CD8-positive, alpha-beta T cell (primary cell): ENCODE measurements at regions of chr1 and their contacts with region 1.

Region 1: GRCh38 chr1:65075123-65075976 is 72.7 kb upstream of the AK4 start:
- DNase-seq: peak; percentile 27 to 88 (median 70)
- ATAC-seq: peak; percentile 98
- H3K4me3 ChIP-seq: no peak overlapping the region
- H3K4me3 Mint-ChIP-seq: no peak overlapping the region
- H3K27ac ChIP-seq: no peak overlapping the region
- H3K27ac Mint-ChIP-seq: no peak overlapping the region
- H3K4me1 ChIP-seq: no peaks in the 10 kb centered on the region
- H3K4me1 Mint-ChIP-seq: peaks cover 19% of the 10 kb centered on the region
- H3K27me3 ChIP-seq: no peaks in the 10 kb centered on the region
- H3K27me3 Mint-ChIP-seq: peaks cover 2% of the 10 kb centered on the region
- CTCF ChIP-seq: peak; percentile 74

Region 2: GRCh38 chr1:64744492-64745180 is 330.7 kb before region 1 on chr1 and contains the start of gene RAVER2:
- CTCF ChIA-PET with region 1: interaction called, 7 read pairs
- POLR2A ChIA-PET with region 1: no interaction called
- intact Hi-C with region 1: loop called in 1 of 2 experiments (anchors 2 kb)
- DNase-seq: peak; percentile 16 to 79 (median 57)
- ATAC-seq: peak; percentile 81
- H3K4me3 ChIP-seq: peak within 1 kb of the TSS; percentile 52 to 64
- H3K4me3 Mint-ChIP-seq: peak within 1 kb of the TSS; percentile 90
- H3K27ac ChIP-seq: peak within 1 kb of the TSS in 1 of 2 experiments; percentile 53
- H3K27ac Mint-ChIP-seq: peak within 1 kb of the TSS; percentile 75
- H3K4me1 ChIP-seq: peaks cover 13% of the 10 kb centered on the region
- H3K4me1 Mint-ChIP-seq: peaks cover 22% of the 10 kb centered on the region
- H3K27me3 ChIP-seq: no peaks in the 10 kb centered on the region
- H3K27me3 Mint-ChIP-seq: peaks cover 4% of the 10 kb centered on the region
- CTCF ChIP-seq: peak; percentile 43
- total RNA-seq, gene RAVER2: 1.1 TPM

Region 3: DNA sequence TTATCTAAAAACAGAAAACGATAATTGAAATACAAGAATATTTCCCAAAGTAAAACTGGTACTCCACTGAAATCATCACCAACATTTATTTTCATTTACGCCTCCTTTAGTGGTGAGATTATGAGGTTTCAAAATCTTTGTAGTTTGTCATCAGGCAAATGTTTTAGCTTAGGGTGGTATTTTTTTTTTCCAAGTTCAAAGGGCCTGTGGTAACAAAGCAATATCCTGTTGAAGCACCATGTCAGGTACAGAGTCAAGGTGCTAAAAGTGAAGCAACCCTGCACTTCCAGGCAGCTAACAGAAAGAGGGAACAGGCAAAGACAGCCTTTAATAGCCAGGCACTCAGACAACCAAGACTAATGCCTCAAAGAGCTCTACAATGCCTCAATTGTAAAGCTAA is 198.2 kb before region 1 on chr1:
- CTCF ChIA-PET with region 1: interaction called, 20 read pairs
- POLR2A ChIA-PET with region 1: no interaction called
- intact Hi-C with region 1: no loop called
- DNase-seq: peak in 6 of 9 experiments; percentile 33 to 92 (median 54)
- ATAC-seq: peak; percentile 93
- H3K4me3 ChIP-seq: no peak overlapping the region
- H3K4me3 Mint-ChIP-seq: peak overlapping the region; percentile 69
- H3K27ac ChIP-seq: peak overlapping the region in 1 of 2 experiments; percentile 51
- H3K27ac Mint-ChIP-seq: peak overlapping the region; percentile 82
- H3K4me1 ChIP-seq: peaks cover 48% of the 10 kb centered on the region
- H3K4me1 Mint-ChIP-seq: peaks cover 79% of the 10 kb centered on the region
- H3K27me3 ChIP-seq: no peaks in the 10 kb centered on the region
- H3K27me3 Mint-ChIP-seq: no peaks in the 10 kb centered on the region
- CTCF ChIP-seq: no peak

Region 4: GRCh38 chr1:64980745-64981600 is 94.4 kb before region 1 on chr1:
- CTCF ChIA-PET with region 1: no interaction called
- POLR2A ChIA-PET with region 1: no interaction called
- intact Hi-C with region 1: no loop called
- DNase-seq: no peak
- ATAC-seq: no peak
- H3K4me3 ChIP-seq: no peak overlapping the region
- H3K4me3 Mint-ChIP-seq: no peak overlapping the region
- H3K27ac ChIP-seq: no peak overlapping the region
- H3K27ac Mint-ChIP-seq: no peak overlapping the region
- H3K4me1 ChIP-seq: no peaks in the 10 kb centered on the region
- H3K4me1 Mint-ChIP-seq: peaks cover 9% of the 10 kb centered on the region
- H3K27me3 ChIP-seq: no peaks in the 10 kb centered on the region
- H3K27me3 Mint-ChIP-seq: no peaks in the 10 kb centered on the region
- CTCF ChIP-seq: no peak

Region 5: DNA sequence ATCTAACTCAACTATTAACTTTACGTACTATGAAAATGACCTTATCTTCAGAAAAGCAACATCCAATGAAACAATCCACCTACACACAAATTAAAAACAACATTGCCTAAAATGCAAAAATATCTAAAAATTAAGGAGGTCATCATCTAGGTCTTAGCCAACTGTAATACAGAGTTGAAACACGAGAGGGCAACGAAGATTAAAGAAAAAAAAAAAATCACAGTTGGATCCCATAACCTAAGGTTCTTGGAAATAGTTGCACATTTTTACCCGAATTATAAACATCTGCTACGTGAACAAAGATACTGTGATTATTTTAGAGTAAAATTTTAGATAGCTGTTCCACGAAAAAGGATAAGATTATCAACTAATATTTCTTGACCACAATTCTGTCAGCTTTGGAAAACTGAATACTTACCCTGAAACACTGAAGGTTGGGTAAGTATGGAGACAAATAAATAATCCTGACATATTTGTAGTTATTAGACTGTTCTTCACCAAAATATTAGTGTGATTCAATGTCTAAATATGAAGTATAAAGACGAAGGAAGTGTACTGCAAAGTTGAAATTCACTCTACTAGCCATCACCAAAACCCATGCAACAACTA is 15.3 kb before region 1 on chr1:
- CTCF ChIA-PET with region 1: interaction called, 118 read pairs
- POLR2A ChIA-PET with region 1: interaction called, 22 read pairs
- intact Hi-C with region 1: loop called (anchors 1 kb)
- DNase-seq: peak in 2 of 9 experiments; percentile 47 to 60
- ATAC-seq: peak; percentile 46
- H3K4me3 ChIP-seq: no peak overlapping the region
- H3K4me3 Mint-ChIP-seq: no peak overlapping the region
- H3K27ac ChIP-seq: no peak overlapping the region
- H3K27ac Mint-ChIP-seq: no peak overlapping the region
- H3K4me1 ChIP-seq: peaks cover 29% of the 10 kb centered on the region
- H3K4me1 Mint-ChIP-seq: peaks cover 60% of the 10 kb centered on the region
- H3K27me3 ChIP-seq: no peaks in the 10 kb centered on the region
- H3K27me3 Mint-ChIP-seq: no peaks in the 10 kb centered on the region
- CTCF ChIP-seq: peak; percentile 64

Region 6: DNA sequence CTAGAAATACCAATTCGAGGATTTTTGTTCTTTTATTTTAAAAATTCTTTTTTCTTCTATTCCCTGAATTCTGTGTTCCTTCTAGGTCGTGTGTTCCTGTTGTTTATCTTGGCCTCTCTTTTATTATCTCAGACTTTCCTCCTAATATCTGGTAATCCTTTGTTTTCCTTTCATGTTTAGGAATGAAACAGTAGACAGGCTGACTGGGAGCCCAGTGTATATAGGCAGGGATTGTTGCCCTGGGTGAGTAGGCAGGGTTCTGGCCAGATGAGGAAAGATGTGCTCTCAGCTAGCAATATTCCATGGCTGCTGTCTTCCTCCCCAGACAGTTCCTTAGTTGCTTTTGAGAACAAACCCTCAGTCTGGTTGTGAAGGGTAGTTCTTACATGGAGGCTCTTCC is 555.5 kb after region 1 on chr1:
- CTCF ChIA-PET with region 1: no interaction called
- POLR2A ChIA-PET with region 1: no interaction called
- intact Hi-C with region 1: no loop called
- DNase-seq: no peak
- ATAC-seq: no peak
- H3K4me3 ChIP-seq: no peak overlapping the region
- H3K4me3 Mint-ChIP-seq: no peak overlapping the region
- H3K27ac ChIP-seq: no peak overlapping the region
- H3K27ac Mint-ChIP-seq: no peak overlapping the region
- H3K4me1 ChIP-seq: no peaks in the 10 kb centered on the region
- H3K4me1 Mint-ChIP-seq: no peaks in the 10 kb centered on the region
- H3K27me3 ChIP-seq: no peaks in the 10 kb centered on the region
- H3K27me3 Mint-ChIP-seq: no peaks in the 10 kb centered on the region
- CTCF ChIP-seq: no peak

Region 7: DNA sequence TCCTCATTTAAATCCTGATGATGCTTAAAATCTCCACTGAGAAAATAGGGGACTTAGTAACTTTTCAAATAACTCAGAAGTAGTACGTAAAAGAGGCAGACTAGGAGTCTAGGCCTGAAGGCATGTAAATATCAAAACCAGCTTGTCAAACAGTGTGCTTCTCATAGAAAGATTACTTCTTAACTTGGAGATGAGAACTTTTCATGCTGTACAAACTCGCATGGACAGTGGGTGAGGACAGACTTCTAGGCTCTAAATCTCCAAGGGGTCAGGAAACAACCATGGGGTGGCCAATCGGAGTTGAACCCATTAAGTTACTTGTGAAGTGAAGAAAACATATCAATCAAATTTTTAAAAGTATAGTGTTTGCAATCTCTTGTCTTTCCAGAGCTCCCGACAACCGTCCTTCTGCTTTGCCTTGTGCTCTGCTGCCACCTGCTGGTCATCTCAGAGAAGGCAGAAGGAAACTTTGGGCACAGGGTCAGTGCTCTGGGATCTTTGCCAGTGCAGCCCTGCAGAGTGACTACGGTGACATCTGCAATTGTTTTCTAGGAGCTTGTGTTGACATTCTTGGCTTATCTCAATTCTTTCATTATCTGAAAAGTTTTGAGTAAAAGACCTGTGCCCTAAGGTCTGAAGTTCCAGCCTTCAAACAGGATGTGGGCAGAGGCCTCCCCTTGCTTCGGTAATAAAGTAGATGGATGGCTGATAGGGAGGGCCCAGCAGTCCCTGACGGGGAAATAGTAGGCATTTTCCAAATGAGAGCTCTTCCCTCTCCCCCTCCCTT is 612.3 kb after region 1 on chr1:
- CTCF ChIA-PET with region 1: interaction called, 3 read pairs
- POLR2A ChIA-PET with region 1: no interaction called
- intact Hi-C with region 1: loop called in 1 of 2 experiments (anchors 5 kb)
- DNase-seq: peak; percentile 51 to 87 (median 75)
- ATAC-seq: peak; percentile 74
- H3K4me3 ChIP-seq: no peak overlapping the region
- H3K4me3 Mint-ChIP-seq: no peak overlapping the region
- H3K27ac ChIP-seq: no peak overlapping the region
- H3K27ac Mint-ChIP-seq: no peak overlapping the region
- H3K4me1 ChIP-seq: peaks cover 8% of the 10 kb centered on the region
- H3K4me1 Mint-ChIP-seq: peaks cover 4% of the 10 kb centered on the region
- H3K27me3 ChIP-seq: no peaks in the 10 kb centered on the region
- H3K27me3 Mint-ChIP-seq: peaks cover 19% of the 10 kb centered on the region
- CTCF ChIP-seq: peak; percentile 99